ENCODE measurements at regions of chr5 and their contacts with region 1.

Region 1: GRCh38 chr5:141713616-141714309 is 31.7 kb upstream of the ARAP3 start:
- DNase-seq: no peak
- ATAC-seq: peak in 3 of 4 donors; percentile 28 to 69 (median 60)
- H3K4me3 ChIP-seq: no peak overlapping the region
- H3K27ac ChIP-seq: peak overlapping the region in 1 of 12 donors; percentile 4
- H3K4me1 ChIP-seq: peaks cover 0 to 13% (median 2%) of the 10 kb centered on the region in 12 donors
- H3K27me3 ChIP-seq: peaks cover 0 to 11% (median 0%) of the 10 kb centered on the region in 9 donors
- CTCF ChIP-seq: no peak
- POLR2A ChIP-seq: no peak

Region 2: DNA sequence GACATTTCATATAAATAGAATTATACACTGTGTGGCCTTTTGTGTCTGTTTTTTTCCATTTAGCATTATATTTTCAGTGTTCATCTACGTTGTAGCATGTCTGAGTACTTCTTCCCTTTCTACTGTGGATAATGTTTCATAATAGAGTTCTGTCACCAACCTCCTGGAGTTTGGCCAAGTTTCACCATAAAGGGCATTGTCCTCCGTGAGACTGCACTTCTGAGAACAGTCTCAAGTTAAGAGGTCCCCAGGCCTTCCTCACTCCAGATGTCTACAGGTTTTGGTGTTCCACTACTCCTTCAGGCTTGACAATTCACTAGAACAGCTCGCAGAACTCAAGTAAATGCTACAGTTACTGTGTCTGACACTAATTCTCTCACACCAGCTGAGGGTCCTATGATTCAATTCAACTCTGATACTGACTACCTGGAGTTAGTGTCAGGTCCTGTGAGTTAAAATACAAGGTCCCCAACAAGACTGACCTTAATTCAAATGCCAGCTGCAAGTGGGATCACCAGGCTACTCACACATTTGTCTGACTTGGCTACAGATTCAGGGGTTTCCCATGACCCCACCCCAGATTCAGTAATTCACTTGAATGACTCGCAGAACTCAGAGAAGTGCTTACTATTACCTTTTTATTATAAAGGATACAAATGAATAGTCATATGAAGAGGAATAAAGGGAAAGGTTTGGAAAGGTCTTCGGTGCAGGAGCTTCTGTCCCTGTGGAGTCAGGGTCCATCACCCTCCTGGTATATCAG is 1118.0 kb before region 1 on chr5:
- intact Hi-C with region 1: no loop called
- DNase-seq: peak in 3 of 5 donors; percentile 51 to 59 (median 57)
- ATAC-seq: peak in 3 of 4 donors; percentile 79 to 82 (median 80)
- H3K4me3 ChIP-seq: peak overlapping the region in 1 of 12 donors; percentile 12
- H3K27ac ChIP-seq: peak overlapping the region in 9 of 12 donors; percentile 16 to 81 (median 43)
- H3K4me1 ChIP-seq: peaks cover 0 to 48% (median 11%) of the 10 kb centered on the region in 12 donors
- H3K27me3 ChIP-seq: no peaks in the 10 kb centered on the region
- CTCF ChIP-seq: no peak
- POLR2A ChIP-seq: no peak

Region 3: DNA sequence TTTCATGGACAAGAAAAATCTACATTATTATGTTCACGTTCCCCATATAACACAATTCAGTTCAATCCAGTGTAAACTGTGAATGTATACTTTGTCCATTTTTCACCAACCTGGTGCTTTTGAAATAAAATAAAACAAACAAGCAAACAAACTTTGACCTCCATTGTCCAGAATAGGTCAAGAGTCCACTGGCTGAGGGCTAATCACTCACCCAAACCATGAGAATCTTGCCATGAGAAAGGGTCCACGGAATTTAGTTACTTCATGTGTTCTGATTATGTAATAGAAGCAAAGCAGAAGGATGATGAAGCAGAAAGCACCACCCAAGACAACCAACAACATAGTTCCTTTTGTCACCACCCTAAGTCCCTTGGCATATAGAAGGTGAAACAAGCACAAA is 123.6 kb before region 1 on chr5:
- intact Hi-C with region 1: no loop called
- DNase-seq: no peak
- ATAC-seq: peak in 1 of 4 donors; percentile 38
- H3K4me3 ChIP-seq: no peak overlapping the region
- H3K27ac ChIP-seq: no peak overlapping the region
- H3K4me1 ChIP-seq: peaks cover 0 to 27% (median 8%) of the 10 kb centered on the region in 12 donors
- H3K27me3 ChIP-seq: no peaks in the 10 kb centered on the region
- CTCF ChIP-seq: no peak
- POLR2A ChIP-seq: no peak

Region 4: GRCh38 chr5:141747152-141748141 is 33.7 kb after region 1 on chr5:
- intact Hi-C with region 1: loop called in 2 of 10 experiments (anchors 5 kb)
- DNase-seq: peak; percentile 84 to 92 (median 88)
- ATAC-seq: peak; percentile 84 to 92 (median 85)
- H3K4me3 ChIP-seq: no peak overlapping the region
- H3K27ac ChIP-seq: no peak overlapping the region
- H3K4me1 ChIP-seq: peaks cover 0 to 12% (median 2%) of the 10 kb centered on the region in 12 donors
- H3K27me3 ChIP-seq: peaks cover 0 to 6% (median 3%) of the 10 kb centered on the region in 9 donors
- CTCF ChIP-seq: no peak
- POLR2A ChIP-seq: no peak

Region 5: DNA sequence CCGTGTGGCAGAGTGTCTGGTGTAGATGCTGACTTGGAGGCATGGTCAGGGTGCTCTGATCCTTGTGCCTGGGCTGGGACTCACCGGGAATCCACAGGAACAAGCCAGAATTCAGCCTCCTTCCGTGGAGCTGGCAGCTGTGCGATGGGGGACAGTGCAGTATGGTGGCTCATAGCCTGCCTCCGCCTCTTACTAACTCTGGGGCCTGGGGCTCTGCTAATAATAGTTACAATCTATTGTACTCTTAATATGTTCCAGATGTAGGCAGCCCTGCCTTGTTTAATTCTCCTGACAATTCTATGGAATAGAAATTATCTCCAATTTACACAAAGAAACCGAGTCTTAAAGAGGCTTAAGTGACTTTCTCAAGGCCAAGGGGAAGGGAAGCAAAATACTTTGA is 86.9 kb after region 1 on chr5:
- intact Hi-C with region 1: no loop called
- DNase-seq: no peak
- ATAC-seq: peak in 1 of 4 donors; percentile 10
- H3K4me3 ChIP-seq: no peak overlapping the region
- H3K27ac ChIP-seq: no peak overlapping the region
- H3K4me1 ChIP-seq: peaks cover 0 to 33% (median 20%) of the 10 kb centered on the region in 12 donors
- H3K27me3 ChIP-seq: peaks cover 0 to 11% (median 0%) of the 10 kb centered on the region in 9 donors
- CTCF ChIP-seq: no peak
- POLR2A ChIP-seq: no peak

Measured in heart left ventricle (tissue), 16 donors.